MCF 10A (cell line): ENCODE measurements at regions of chr1 and their contacts with region 1.

Region 1: GRCh38 chr1:26959722-26960615 is at the start of gene KDF1:
- DNase-seq: peak; percentile 80
- H3K4me3 Mint-ChIP-seq: peak within 1 kb of the TSS; percentile 91
- H3K27ac Mint-ChIP-seq: peak within 1 kb of the TSS; percentile 85
- H3K4me1 Mint-ChIP-seq: peaks cover 36% of the 10 kb centered on the region
- H3K27me3 Mint-ChIP-seq: no peaks in the 10 kb centered on the region
- CTCF ChIP-seq: peak; percentile 15
- total RNA-seq, gene KDF1: 5.1 and 8.8 TPM in 2 replicates

Region 2: DNA sequence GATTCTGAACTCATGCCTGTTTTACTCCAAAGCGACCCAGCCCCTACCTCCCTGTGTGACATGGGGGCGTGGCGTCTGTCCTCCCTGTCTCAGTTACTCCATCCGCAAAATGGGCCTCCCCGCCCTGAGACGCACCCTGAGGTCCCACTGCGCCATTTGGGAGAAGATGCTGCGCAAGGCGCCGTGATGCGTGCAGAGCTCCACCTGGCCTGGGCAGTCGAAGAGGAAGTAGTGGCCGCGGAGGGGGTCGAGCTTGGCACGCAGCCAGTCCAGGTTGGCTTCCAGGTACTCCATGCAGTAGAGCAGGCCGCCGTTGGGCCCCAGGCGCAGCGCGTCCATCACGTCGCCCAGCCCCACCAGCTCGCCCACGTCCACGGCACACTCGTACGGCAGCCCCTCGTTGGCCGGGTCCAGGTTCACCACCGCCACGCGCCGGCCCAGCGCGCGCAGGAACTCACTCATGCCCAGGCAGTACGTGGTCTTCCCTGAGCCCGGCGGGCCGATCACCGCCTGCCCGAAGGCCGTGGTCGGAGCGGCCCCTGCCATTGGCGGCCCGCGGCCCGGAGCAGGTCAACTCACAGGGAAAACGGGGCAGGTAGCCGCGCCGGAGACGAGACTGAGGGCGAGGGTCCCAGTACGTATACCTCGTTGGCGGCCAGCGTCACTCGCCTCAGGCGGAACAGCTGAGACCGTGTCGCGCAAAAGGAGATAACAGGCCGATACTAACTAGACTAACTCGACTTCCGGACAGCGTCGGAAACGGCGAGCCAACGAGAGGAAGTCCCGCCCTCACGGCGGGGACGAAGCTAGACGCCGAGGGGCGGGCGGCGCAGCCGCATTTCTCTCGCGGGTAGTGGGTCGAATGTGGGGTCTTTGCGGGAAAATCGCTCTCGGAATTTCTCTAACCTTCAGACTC is 70.2 kb before region 1 on chr1 and contains the start of gene GPN2:
- CTCF ChIA-PET with region 1: no interaction called
- POLR2A ChIA-PET with region 1: interaction called, 22 read pairs
- intact Hi-C with region 1: no loop called
- DNase-seq: peak; percentile 75
- H3K4me3 Mint-ChIP-seq: peak within 1 kb of the TSS; percentile 91
- H3K27ac Mint-ChIP-seq: peak within 1 kb of the TSS; percentile 93
- H3K4me1 Mint-ChIP-seq: peaks cover 23% of the 10 kb centered on the region
- H3K27me3 Mint-ChIP-seq: no peaks in the 10 kb centered on the region
- CTCF ChIP-seq: no peak
- total RNA-seq, gene GPN2: 38.9 and 39.7 TPM in 2 replicates

Region 3: DNA sequence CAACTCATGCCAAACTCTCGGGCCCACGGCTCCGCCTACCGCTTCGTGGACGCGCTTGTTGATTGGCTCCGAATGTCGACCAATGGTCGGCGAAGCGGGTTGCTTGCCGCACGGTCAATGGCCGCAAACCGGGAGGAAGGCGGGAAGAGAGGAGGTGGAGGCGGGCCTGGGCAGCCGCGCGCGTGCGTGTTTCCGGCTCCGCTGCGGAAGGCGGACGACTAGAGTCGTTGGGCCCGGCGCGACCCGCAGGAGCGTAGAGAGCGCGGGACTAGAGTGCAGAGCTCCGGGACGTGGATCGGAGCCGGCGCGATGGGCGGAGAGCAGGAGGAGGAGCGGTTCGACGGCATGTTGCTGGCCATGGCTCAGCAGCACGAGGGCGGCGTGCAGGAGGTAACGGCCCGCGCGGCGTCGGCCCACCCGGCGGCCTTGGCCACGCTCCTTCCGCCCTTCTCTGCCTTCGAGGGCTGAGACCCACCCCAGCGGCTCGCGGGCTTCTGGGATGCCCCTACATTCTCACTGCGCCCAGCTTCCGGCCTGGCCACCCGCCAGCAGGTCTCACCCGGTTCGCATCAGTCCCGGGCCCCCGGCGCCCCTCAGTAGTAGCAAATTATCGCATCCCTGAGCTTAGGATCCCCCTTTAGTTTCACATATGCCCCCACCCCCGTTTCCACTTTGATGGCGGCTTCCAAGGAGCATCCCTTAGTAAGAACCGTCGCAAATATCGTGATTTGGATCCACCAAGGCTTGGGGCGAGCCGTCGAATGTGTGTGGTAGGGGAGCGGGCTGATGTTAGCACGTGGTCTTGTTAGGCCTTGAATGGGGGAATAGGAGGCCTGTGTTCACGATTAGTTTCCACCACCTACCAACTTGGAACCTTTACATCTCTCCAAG is 38.2 kb before region 1 on chr1 and contains the start of gene NUDC:
- CTCF ChIA-PET with region 1: no interaction called
- POLR2A ChIA-PET with region 1: interaction called, 16 read pairs
- intact Hi-C with region 1: no loop called
- DNase-seq: peak; percentile 97
- H3K4me3 Mint-ChIP-seq: peak within 1 kb of the TSS; percentile 98
- H3K27ac Mint-ChIP-seq: peak within 1 kb of the TSS; percentile 97
- H3K4me1 Mint-ChIP-seq: peaks cover 17% of the 10 kb centered on the region
- H3K27me3 Mint-ChIP-seq: no peaks in the 10 kb centered on the region
- CTCF ChIP-seq: no peak
- total RNA-seq, gene NUDC: 96.8 and 106 TPM in 2 replicates

Region 4: DNA sequence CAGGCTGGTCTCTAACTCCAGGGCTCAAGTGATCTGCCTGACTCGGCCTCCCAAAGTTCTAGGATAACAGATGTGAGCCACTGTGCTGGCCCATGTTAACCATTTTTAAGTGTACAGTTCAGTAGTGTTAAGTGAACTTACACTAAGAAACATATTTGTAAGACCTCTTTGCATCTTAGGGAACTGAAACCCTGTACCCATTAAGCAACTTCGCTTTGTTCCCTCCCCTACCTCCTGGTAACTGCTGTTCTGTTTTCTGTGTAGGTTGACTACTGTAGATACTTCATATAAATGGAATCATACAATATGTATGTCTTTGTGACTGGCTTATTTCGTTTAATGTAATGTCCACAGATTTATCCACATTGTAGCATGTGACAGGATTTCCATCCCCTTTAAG is 27.4 kb before region 1 on chr1:
- CTCF ChIA-PET with region 1: no interaction called
- POLR2A ChIA-PET with region 1: no interaction called
- intact Hi-C with region 1: no loop called
- DNase-seq: no peak
- H3K4me3 Mint-ChIP-seq: no peak overlapping the region
- H3K27ac Mint-ChIP-seq: no peak overlapping the region
- H3K4me1 Mint-ChIP-seq: no peaks in the 10 kb centered on the region
- H3K27me3 Mint-ChIP-seq: no peaks in the 10 kb centered on the region
- CTCF ChIP-seq: no peak

Region 5: DNA sequence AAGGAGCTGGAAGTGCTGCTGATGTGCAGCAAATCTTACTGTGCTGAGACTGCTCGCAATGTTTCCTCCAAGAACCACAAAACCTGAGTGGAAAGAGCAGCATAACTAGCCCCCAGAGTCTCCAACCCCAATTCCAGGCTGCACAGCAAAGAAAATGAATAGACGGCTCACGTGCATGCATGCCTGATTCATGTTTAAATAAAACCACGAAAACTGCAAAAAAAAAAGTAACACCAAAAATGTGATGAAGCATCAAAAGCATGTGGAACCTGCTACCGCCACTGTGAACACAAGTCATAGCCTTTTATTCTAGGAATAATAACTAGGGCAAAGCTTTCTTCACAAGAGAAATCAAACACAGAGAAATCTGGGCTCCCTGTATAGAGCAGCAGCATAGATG is 23.9 kb after region 1 on chr1:
- CTCF ChIA-PET with region 1: interaction called, 3 read pairs
- POLR2A ChIA-PET with region 1: interaction called, 14 read pairs
- intact Hi-C with region 1: no loop called
- DNase-seq: no peak
- H3K4me3 Mint-ChIP-seq: no peak overlapping the region
- H3K27ac Mint-ChIP-seq: no peak overlapping the region
- H3K4me1 Mint-ChIP-seq: peaks cover 6% of the 10 kb centered on the region
- H3K27me3 Mint-ChIP-seq: no peaks in the 10 kb centered on the region
- CTCF ChIP-seq: no peak

Region 6: GRCh38 chr1:27010989-27011764 is 51.2 kb after region 1 on chr1:
- CTCF ChIA-PET with region 1: interaction called, 3 read pairs
- POLR2A ChIA-PET with region 1: interaction called, 42 read pairs
- intact Hi-C with region 1: no loop called
- DNase-seq: peak; percentile 95
- H3K4me3 Mint-ChIP-seq: peak overlapping the region; percentile 78
- H3K27ac Mint-ChIP-seq: peak overlapping the region; percentile 78
- H3K4me1 Mint-ChIP-seq: peaks cover 14% of the 10 kb centered on the region
- H3K27me3 Mint-ChIP-seq: no peaks in the 10 kb centered on the region
- CTCF ChIP-seq: no peak

Region 7: GRCh38 chr1:27136241-27136561 is 176.2 kb after region 1 on chr1:
- CTCF ChIA-PET with region 1: no interaction called
- POLR2A ChIA-PET with region 1: no interaction called
- intact Hi-C with region 1: no loop called
- DNase-seq: no peak
- H3K4me3 Mint-ChIP-seq: no peak overlapping the region
- H3K27ac Mint-ChIP-seq: no peak overlapping the region
- H3K4me1 Mint-ChIP-seq: peaks cover 39% of the 10 kb centered on the region
- H3K27me3 Mint-ChIP-seq: no peaks in the 10 kb centered on the region
- CTCF ChIP-seq: no peak